ENCODE measurements at regions of chr4 and their contacts with region 1.

Region 1: DNA sequence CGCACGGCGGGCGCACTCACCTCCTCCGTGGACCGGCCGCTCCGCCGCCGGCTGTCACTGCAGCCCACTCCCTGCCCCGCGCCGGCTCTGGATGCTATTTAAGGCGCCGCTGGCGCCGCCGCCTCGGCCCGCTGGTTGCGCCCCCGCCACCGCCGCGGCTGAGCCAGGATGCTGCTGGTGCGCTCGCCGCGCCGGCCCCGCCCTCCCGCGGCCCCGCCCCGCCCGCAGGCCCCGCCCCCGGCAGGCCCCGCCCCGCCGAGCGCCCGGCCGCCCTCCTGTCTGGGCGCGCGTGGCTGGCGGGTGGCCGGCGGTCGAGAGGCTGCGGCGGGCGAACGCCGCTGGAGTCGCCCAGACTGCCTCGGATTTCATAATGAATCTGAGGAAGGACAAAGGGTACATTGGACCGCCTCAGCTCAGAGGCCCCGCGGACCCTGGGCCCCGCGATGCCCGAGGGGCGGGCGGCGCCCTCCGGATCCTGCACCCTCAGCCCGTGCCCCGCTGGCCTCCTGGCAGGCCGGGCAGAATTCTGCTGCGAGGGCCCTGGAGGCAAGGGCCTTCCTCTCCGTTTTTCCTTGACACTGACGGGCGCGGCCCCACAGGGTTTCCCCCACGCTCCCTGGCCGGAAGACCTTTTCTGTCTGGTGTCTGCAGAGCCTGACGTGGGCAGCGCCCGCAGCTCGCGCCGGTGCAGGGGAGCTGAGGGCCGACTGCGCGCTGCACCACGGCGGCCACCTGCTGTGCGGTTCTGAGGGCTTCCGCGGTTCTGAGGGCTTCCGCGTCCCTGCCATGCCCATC is at the start of gene ACSL1:
- DNase-seq: peak; percentile 76 to 90 (median 83)
- H3K4me3 ChIP-seq: peak within 1 kb of the TSS; percentile 90 to 100 (median 97)
- H3K4me3 Mint-ChIP-seq: peak within 1 kb of the TSS; percentile 99 to 100
- H3K27ac ChIP-seq: peak within 1 kb of the TSS; percentile 80 to 85
- H3K27ac Mint-ChIP-seq: peak within 1 kb of the TSS; percentile 93 to 98 (median 96)
- H3K4me1 ChIP-seq: peaks cover 50% of the 10 kb centered on the region in 2 donors
- H3K4me1 Mint-ChIP-seq: peaks cover 52% of the 10 kb centered on the region
- H3K27me3 ChIP-seq: no peaks in the 10 kb centered on the region
- H3K27me3 Mint-ChIP-seq: peaks cover 0 to 6% (median 0%) of the 10 kb centered on the region in 3 donors
- CTCF ChIP-seq: no peak
- polyA plus RNA-seq, gene ACSL1: 72.4 to 115 (median 115) TPM

Region 2: DNA sequence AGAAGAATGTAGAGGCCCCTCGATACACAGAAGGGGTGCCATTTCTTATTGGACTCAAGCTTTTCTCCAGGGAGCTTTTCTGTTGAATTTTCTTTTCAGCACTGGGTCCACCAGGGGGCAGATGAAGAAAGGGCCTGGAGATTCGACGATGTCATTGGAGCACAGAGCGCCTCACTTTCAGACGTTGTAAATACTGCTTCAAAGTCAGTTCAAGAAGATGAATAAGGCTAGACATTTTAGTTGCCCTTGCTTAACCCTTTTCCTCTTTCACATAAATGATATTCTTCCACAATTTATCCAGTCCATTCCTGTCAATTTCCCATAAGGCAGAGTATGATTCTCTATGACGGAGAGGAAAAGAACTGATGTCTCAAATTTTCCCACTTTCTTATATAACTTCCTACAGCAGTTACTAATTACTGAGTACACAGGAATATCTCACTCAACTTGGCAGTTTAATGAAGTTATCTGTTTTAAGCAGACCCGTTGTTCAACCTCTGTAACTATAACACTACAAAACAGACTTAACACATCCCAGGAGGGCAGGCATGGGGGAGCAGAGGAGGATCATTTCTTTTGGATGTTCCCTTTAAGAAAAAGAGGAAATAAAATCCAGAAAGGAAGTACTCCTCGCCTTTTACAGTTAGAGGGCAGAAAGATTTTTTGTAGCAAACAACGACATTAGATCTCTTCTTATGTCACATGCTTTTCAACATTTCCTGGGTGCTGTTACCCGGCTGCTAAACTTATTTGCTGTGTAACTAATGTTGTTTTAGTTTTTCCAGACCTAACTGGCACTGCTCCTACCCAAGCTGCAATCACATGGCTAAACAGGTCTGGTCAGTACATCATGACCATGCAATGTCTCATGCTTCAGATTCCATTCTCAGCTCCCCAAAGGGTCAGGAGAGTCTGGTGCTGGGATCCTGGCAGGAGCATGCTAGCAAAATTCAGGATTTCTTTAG is 80.0 kb before region 1 on chr4:
- intact Hi-C with region 1: loop called in 1 of 2 experiments (anchors 10 kb)
- DNase-seq: peak; percentile 60 to 64 (median 62)
- H3K4me3 ChIP-seq: peak overlapping the region; percentile 4 to 64 (median 21)
- H3K4me3 Mint-ChIP-seq: peak overlapping the region; percentile 34 to 85
- H3K27ac ChIP-seq: peak overlapping the region; percentile 74 to 80
- H3K27ac Mint-ChIP-seq: peak overlapping the region; percentile 84 to 94 (median 93)
- H3K4me1 ChIP-seq: peaks cover 34 to 42% of the 10 kb centered on the region in 2 donors
- H3K4me1 Mint-ChIP-seq: peaks cover 51% of the 10 kb centered on the region
- H3K27me3 ChIP-seq: no peaks in the 10 kb centered on the region
- H3K27me3 Mint-ChIP-seq: peaks cover 0 to 4% (median 0%) of the 10 kb centered on the region in 3 donors
- CTCF ChIP-seq: peak; percentile 77

Region 3: DNA sequence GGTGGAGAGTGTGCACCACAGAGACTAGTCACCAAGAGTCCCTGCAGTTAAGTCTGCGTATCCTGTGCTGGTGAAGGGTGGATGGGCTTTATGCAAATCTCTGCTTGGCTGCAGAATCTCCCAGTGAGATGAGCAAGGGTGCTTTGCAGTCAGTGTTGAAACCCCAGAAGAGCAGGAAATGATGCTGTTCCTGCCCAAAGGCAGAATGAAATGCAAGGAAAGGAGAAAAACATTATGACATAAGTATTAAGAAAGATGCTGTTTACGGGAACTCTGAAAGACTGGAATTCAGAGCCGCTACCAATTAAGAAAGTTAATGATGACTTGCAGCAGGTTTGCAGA is 25.1 kb after region 1 on chr4:
- intact Hi-C with region 1: loop called in 1 of 2 experiments (anchors 2 kb)
- DNase-seq: peak; percentile 90 to 96 (median 91)
- H3K4me3 ChIP-seq: peak overlapping the region in 1 of 3 experiments; percentile 52
- H3K4me3 Mint-ChIP-seq: no peak overlapping the region
- H3K27ac ChIP-seq: peak overlapping the region; percentile 83 to 93
- H3K27ac Mint-ChIP-seq: no peak overlapping the region
- H3K4me1 ChIP-seq: peaks cover 79 to 88% of the 10 kb centered on the region in 2 donors
- H3K4me1 Mint-ChIP-seq: peaks cover 12% of the 10 kb centered on the region
- H3K27me3 ChIP-seq: no peaks in the 10 kb centered on the region
- H3K27me3 Mint-ChIP-seq: peaks cover 2 to 3% (median 3%) of the 10 kb centered on the region in 3 donors
- CTCF ChIP-seq: no peak

Region 4: DNA sequence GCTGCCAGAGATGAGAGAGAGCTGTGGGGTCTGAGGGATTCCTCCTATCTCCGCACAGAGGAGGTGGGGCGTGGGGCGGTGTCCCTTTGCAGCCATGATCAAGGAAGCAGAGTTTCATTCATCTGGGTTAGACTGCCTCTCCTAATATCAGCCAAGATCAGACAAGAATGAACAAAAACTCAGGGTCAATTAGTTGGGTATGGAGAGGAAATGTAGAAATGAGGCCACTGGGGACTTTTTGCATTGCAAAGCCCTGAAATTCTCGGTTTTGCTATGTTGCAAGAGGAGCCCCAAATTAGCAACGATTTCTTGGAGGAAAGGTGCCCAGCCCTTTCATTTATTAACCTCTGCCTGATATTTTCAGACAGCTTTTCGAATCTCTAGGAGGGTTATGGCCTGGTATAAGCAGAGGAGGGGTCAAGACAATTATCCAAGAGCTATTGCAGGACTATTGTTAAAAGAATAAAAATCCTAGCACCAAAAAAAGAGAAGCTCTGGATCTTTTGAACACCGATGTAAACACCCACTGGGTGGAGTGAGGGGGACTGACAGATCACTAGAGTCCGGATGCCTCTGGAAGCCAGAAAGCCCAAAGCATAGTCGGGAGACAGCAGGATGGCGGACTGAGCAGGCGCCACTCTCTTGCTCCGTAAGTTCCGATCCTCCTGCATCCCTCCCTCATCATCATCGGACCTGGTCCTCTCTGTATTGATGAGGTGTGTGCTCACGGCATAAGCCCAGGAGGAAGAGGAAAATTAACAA is 34.1 kb after region 1 on chr4:
- intact Hi-C with region 1: loop called in 1 of 2 experiments (anchors 5 kb)
- DNase-seq: peak; percentile 77 to 89 (median 78)
- H3K4me3 ChIP-seq: peak overlapping the region in 1 of 3 experiments; percentile 55
- H3K4me3 Mint-ChIP-seq: peak overlapping the region; percentile 44 to 75
- H3K27ac ChIP-seq: peak overlapping the region; percentile 80 to 95
- H3K27ac Mint-ChIP-seq: peak overlapping the region; percentile 95 to 99 (median 97)
- H3K4me1 ChIP-seq: peaks cover 62 to 69% of the 10 kb centered on the region in 2 donors
- H3K4me1 Mint-ChIP-seq: peaks cover 62% of the 10 kb centered on the region
- H3K27me3 ChIP-seq: no peaks in the 10 kb centered on the region
- H3K27me3 Mint-ChIP-seq: peaks cover 0 to 2% (median 0%) of the 10 kb centered on the region in 3 donors
- CTCF ChIP-seq: no peak

Region 5: GRCh38 chr4:184896868-184897715 is 71.0 kb after region 1 on chr4:
- intact Hi-C with region 1: loop called (anchors 2 to 10 kb)
- DNase-seq: peak; percentile 90 to 98 (median 95)
- H3K4me3 ChIP-seq: peak overlapping the region in 1 of 3 experiments; percentile 62
- H3K4me3 Mint-ChIP-seq: peak overlapping the region; percentile 39 to 76
- H3K27ac ChIP-seq: peak overlapping the region; percentile 92 to 97
- H3K27ac Mint-ChIP-seq: peak overlapping the region; percentile 95 to 100 (median 98)
- H3K4me1 ChIP-seq: peaks cover 61 to 68% of the 10 kb centered on the region in 2 donors
- H3K4me1 Mint-ChIP-seq: peaks cover 67% of the 10 kb centered on the region
- H3K27me3 ChIP-seq: no peaks in the 10 kb centered on the region
- H3K27me3 Mint-ChIP-seq: peaks cover 0 to 2% (median 2%) of the 10 kb centered on the region in 3 donors
- CTCF ChIP-seq: no peak

Region 6: GRCh38 chr4:184968784-184969201 is 142.7 kb after region 1 on chr4:
- intact Hi-C with region 1: loop called in 1 of 2 experiments (anchors 10 kb)
- DNase-seq: no peak
- H3K4me3 ChIP-seq: no peak overlapping the region
- H3K4me3 Mint-ChIP-seq: no peak overlapping the region
- H3K27ac ChIP-seq: no peak overlapping the region
- H3K27ac Mint-ChIP-seq: no peak overlapping the region
- H3K4me1 ChIP-seq: peaks cover 9 to 10% of the 10 kb centered on the region in 2 donors
- H3K4me1 Mint-ChIP-seq: peaks cover 11% of the 10 kb centered on the region
- H3K27me3 ChIP-seq: no peaks in the 10 kb centered on the region
- H3K27me3 Mint-ChIP-seq: peaks cover 2 to 16% (median 5%) of the 10 kb centered on the region in 3 donors
- CTCF ChIP-seq: no peak

Measured in CD14-positive monocyte (primary cell).